Naive thymus-derived CD8-positive, alpha-beta T cell (primary cell): ENCODE measurements at regions of chr12 and their contacts with region 1.

Region 1: GRCh38 chr12:12786716-12787601 is 1.5 kb downstream of the APOLD1 start:
- DNase-seq: peak; percentile 53 to 83 (median 73)
- ATAC-seq: peak; percentile 85 to 90
- H3K4me3 Mint-ChIP-seq: peak overlapping the region; percentile 80 to 91 (median 85)
- H3K27ac Mint-ChIP-seq: peak overlapping the region; percentile 79 to 96 (median 92)
- H3K4me1 Mint-ChIP-seq: peaks cover 4 to 26% (median 20%) of the 10 kb centered on the region in 4 donors
- H3K27me3 Mint-ChIP-seq: no peaks in the 10 kb centered on the region

Region 2: GRCh38 chr12:12770262-12770661 is 16.7 kb before region 1 on chr12:
- POLR2A ChIA-PET with region 1: no interaction called
- DNase-seq: no peak
- ATAC-seq: no peak
- H3K4me3 Mint-ChIP-seq: no peak overlapping the region
- H3K27ac Mint-ChIP-seq: no peak overlapping the region
- H3K4me1 Mint-ChIP-seq: no peaks in the 10 kb centered on the region
- H3K27me3 Mint-ChIP-seq: no peaks in the 10 kb centered on the region

Region 3: GRCh38 chr12:12813120-12814101 is 26.5 kb after region 1 on chr12 and contains the start of gene DDX47:
- POLR2A ChIA-PET with region 1: interaction called, 68 read pairs
- DNase-seq: peak; percentile 89 to 99 (median 96)
- ATAC-seq: peak; percentile 74 to 75
- H3K4me3 Mint-ChIP-seq: peak within 1 kb of the TSS; percentile 82 to 97 (median 92)
- H3K27ac Mint-ChIP-seq: peak within 1 kb of the TSS; percentile 90 to 98 (median 95)
- H3K4me1 Mint-ChIP-seq: peaks cover 30 to 83% (median 70%) of the 10 kb centered on the region in 4 donors
- H3K27me3 Mint-ChIP-seq: no peaks in the 10 kb centered on the region
- polyA plus RNA-seq, gene DDX47: 61.0 to 77.1 (median 62.7) TPM